ENCODE measurements at regions of chr3 and their contacts with region 1.

Region 1: GRCh38 chr3:89617706-89618105 is 510.3 kb downstream of the EPHA3 start:
- DNase-seq: no peak
- ATAC-seq: no peak
- H3K4me3 ChIP-seq: no peak overlapping the region
- H3K4me3 Mint-ChIP-seq: no peak overlapping the region
- H3K27ac ChIP-seq: no peak overlapping the region
- H3K27ac Mint-ChIP-seq: no peak overlapping the region
- H3K4me1 ChIP-seq: no peaks in the 10 kb centered on the region
- H3K4me1 Mint-ChIP-seq: no peaks in the 10 kb centered on the region
- H3K27me3 ChIP-seq: no peaks in the 10 kb centered on the region
- H3K27me3 Mint-ChIP-seq: no peaks in the 10 kb centered on the region
- CTCF ChIP-seq: no peak

Region 2: GRCh38 chr3:89560546-89560945 is 57.2 kb before region 1 on chr3:
- CTCF ChIA-PET with region 1: no interaction called
- POLR2A ChIA-PET with region 1: no interaction called
- intact Hi-C with region 1: no loop called
- DNase-seq: no peak
- ATAC-seq: no peak
- H3K4me3 ChIP-seq: no peak overlapping the region
- H3K4me3 Mint-ChIP-seq: no peak overlapping the region
- H3K27ac ChIP-seq: no peak overlapping the region
- H3K27ac Mint-ChIP-seq: no peak overlapping the region
- H3K4me1 ChIP-seq: no peaks in the 10 kb centered on the region
- H3K4me1 Mint-ChIP-seq: no peaks in the 10 kb centered on the region
- H3K27me3 ChIP-seq: no peaks in the 10 kb centered on the region
- H3K27me3 Mint-ChIP-seq: no peaks in the 10 kb centered on the region
- CTCF ChIP-seq: no peak

Region 3: DNA sequence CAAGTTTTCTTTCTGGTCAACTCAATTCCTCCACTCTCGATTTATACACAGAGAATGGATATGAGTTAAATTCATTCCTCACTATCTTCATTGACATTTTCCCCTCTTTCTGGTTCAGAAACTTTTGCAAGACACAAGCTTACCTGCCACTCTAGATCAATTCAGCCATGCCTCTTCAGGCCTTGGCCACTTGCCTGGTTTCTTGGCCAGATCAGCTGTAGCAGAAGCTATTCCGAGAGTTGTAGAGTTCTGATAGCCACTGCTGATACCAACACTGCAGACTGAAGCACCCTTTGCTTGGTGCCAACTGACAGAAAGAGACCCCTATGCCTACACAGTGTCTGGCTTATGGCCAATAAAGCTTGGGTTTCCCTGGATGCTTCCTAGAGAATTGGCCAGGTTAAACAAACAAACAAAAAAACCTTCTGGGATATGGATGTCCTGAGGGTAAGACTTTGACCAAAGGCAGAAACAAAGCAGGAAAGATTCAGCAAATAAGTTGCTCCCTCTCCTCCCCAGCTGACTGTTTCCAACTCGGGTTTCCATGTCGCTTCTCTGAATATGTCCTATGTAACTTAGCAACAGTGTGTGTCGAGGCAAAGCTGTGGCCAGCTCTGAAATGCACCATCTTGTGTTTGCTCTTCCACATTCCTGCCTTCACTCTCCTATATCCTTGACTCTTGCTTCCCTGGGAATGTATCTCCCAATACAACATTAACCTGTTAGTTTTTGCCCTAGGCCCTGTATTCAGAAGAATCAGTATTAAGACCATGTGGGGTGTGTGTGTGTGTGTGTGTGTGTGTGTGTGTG is 11.4 kb after region 1 on chr3:
- CTCF ChIA-PET with region 1: no interaction called
- POLR2A ChIA-PET with region 1: no interaction called
- intact Hi-C with region 1: loop called (anchors 1 kb)
- DNase-seq: no peak
- ATAC-seq: no peak
- H3K4me3 ChIP-seq: no peak overlapping the region
- H3K4me3 Mint-ChIP-seq: no peak overlapping the region
- H3K27ac ChIP-seq: no peak overlapping the region
- H3K27ac Mint-ChIP-seq: no peak overlapping the region
- H3K4me1 ChIP-seq: no peaks in the 10 kb centered on the region
- H3K4me1 Mint-ChIP-seq: no peaks in the 10 kb centered on the region
- H3K27me3 ChIP-seq: no peaks in the 10 kb centered on the region
- H3K27me3 Mint-ChIP-seq: no peaks in the 10 kb centered on the region
- CTCF ChIP-seq: no peak

Region 4: DNA sequence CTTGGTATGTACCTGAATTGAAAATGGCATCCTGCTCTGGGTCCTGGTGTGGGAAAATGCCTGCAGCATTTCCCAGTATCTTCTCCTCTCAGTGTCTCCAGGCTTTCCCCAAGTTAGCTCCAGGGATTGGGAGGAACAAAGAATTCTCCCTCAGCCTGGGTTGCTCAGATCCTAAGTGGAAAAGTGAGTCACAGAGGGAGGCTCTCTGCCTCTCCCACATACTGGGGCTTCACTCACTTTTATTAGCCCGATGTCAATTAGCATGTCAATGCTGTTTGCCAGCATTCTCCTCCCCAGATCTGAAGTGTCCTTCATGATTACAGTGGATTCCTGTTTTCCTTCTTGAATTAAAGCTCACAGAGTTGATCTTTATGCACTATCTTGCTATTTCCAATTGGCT is 144.7 kb after region 1 on chr3:
- CTCF ChIA-PET with region 1: no interaction called
- POLR2A ChIA-PET with region 1: no interaction called
- intact Hi-C with region 1: no loop called
- DNase-seq: no peak
- ATAC-seq: no peak
- H3K4me3 ChIP-seq: no peak overlapping the region
- H3K4me3 Mint-ChIP-seq: no peak overlapping the region
- H3K27ac ChIP-seq: no peak overlapping the region
- H3K27ac Mint-ChIP-seq: no peak overlapping the region
- H3K4me1 ChIP-seq: no peaks in the 10 kb centered on the region
- H3K4me1 Mint-ChIP-seq: no peaks in the 10 kb centered on the region
- H3K27me3 ChIP-seq: no peaks in the 10 kb centered on the region
- H3K27me3 Mint-ChIP-seq: no peaks in the 10 kb centered on the region
- CTCF ChIP-seq: no peak

Measured in B cell (primary cell).